Spleen (tissue), 13 donors: ENCODE measurements at regions of chr9 and their contacts with region 1.

Region 1: GRCh38 chr9:27333241-27334052 is 36.5 kb upstream of the EQTN start:
- DNase-seq: no peak
- H3K4me3 ChIP-seq: no peak overlapping the region
- H3K27ac ChIP-seq: peak overlapping the region in 1 of 8 donors; percentile 36
- H3K4me1 ChIP-seq: peaks cover 11 to 42% (median 20%) of the 10 kb centered on the region in 6 donors
- H3K27me3 ChIP-seq: no peaks in the 10 kb centered on the region
- CTCF ChIP-seq: peak; percentile 86 to 96 (median 89)
- POLR2A ChIP-seq: no peak

Region 2: GRCh38 chr9:27142299-27142930 is 191.0 kb before region 1 on chr9:
- intact Hi-C with region 1: no loop called
- DNase-seq: no peak
- H3K4me3 ChIP-seq: no peak overlapping the region
- H3K27ac ChIP-seq: peak overlapping the region in 1 of 8 donors; percentile 21
- H3K4me1 ChIP-seq: no peaks in the 10 kb centered on the region
- H3K27me3 ChIP-seq: no peaks in the 10 kb centered on the region
- CTCF ChIP-seq: no peak
- POLR2A ChIP-seq: no peak

Region 3: DNA sequence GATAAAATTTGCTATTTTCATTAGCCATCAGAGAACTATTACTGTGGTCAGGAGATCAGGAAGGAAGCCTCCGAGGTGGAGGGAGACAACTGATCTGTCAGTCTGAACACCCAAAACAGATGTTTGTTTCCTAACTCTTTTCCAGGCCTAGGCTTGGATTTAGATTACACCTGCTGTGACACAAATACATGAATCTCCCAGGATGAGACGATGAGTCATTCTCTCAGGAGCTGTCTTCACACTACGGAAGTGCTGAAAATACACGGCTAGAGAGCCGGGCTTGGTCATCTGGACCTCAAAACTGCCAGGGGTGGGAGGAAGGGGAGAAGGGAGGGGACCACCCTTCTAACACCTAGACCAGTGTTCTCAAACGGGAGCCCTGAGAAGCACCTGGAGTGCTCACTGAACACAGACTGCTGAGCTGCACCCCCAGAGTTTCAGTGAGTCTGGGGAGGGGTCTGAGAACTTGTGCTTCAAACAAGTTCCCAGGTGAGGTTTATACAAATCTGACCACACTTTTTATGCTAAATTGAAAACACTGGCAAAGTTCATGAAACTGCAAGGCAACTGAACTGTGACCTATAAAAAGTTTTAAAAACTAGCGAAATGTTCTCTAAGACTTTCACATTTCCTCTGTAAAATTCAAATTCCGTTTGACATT is 43.8 kb after region 1 on chr9:
- intact Hi-C with region 1: no loop called
- DNase-seq: no peak
- H3K4me3 ChIP-seq: no peak overlapping the region
- H3K27ac ChIP-seq: peak overlapping the region; percentile 21 to 90 (median 77)
- H3K4me1 ChIP-seq: peaks cover 12 to 70% (median 32%) of the 10 kb centered on the region in 6 donors
- H3K27me3 ChIP-seq: no peaks in the 10 kb centered on the region
- CTCF ChIP-seq: no peak
- POLR2A ChIP-seq: no peak

Region 4: GRCh38 chr9:27529316-27530278 is 196.2 kb after region 1 on chr9 and contains the start of gene MOB3B:
- intact Hi-C with region 1: loop called (anchors 5 kb)
- DNase-seq: peak; percentile 97
- H3K4me3 ChIP-seq: peak within 1 kb of the TSS; percentile 70 to 93 (median 82)
- H3K27ac ChIP-seq: peak within 1 kb of the TSS; percentile 78 to 95 (median 90)
- H3K4me1 ChIP-seq: peaks cover 7 to 85% (median 50%) of the 10 kb centered on the region in 6 donors
- H3K27me3 ChIP-seq: peaks cover 0 to 20% (median 0%) of the 10 kb centered on the region in 7 donors
- CTCF ChIP-seq: peak; percentile 80 to 98 (median 92)
- POLR2A ChIP-seq: no peak
- total RNA-seq, gene MOB3B: 14.0 to 27.7 (median 21.9) TPM

Region 5: GRCh38 chr9:27554712-27555111 is 221.3 kb after region 1 on chr9:
- intact Hi-C with region 1: loop called (anchors 5 kb)
- DNase-seq: no peak
- H3K4me3 ChIP-seq: no peak overlapping the region
- H3K27ac ChIP-seq: no peak overlapping the region
- H3K4me1 ChIP-seq: no peaks in the 10 kb centered on the region
- H3K27me3 ChIP-seq: no peaks in the 10 kb centered on the region
- CTCF ChIP-seq: no peak
- POLR2A ChIP-seq: no peak